BJ (cell line): ENCODE measurements at regions of chr7 and their contacts with region 1.

Region 1: DNA sequence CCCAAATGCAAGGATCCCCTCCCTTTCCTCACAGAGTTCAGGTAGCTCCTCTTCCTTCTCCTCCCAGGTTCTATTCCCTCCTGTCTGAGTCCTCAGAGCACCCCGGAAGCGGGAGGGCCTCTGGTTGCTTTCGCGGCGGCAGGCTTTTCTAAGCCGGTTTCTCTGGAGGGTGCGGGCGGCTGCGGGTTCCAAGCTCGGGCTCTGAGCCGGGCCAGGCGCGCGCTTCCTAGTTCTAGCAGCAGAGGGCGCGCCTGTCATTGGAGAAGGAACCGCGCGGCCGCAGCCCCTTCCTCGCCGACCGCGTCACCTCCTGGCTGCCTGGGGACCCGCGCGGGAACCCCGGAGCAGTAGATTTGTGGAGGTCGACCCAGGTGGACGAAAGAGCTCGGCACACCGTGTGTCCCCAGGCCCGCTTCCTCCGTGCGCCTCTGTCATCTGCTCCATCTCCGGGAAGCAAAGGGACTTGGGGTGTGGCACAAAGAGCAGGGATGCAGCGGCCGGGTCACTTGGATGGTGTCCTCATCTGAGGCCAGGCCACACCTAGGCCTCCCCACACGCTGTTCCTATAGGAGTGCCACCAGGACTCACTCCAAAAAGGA is 389.0 kb upstream of the PODXL start:
- DNase-seq: no peak
- H3K4me3 ChIP-seq: no peak overlapping the region
- H3K27me3 ChIP-seq: peaks cover 7% of the 10 kb centered on the region
- CTCF ChIP-seq: peak; percentile 92

Region 2: DNA sequence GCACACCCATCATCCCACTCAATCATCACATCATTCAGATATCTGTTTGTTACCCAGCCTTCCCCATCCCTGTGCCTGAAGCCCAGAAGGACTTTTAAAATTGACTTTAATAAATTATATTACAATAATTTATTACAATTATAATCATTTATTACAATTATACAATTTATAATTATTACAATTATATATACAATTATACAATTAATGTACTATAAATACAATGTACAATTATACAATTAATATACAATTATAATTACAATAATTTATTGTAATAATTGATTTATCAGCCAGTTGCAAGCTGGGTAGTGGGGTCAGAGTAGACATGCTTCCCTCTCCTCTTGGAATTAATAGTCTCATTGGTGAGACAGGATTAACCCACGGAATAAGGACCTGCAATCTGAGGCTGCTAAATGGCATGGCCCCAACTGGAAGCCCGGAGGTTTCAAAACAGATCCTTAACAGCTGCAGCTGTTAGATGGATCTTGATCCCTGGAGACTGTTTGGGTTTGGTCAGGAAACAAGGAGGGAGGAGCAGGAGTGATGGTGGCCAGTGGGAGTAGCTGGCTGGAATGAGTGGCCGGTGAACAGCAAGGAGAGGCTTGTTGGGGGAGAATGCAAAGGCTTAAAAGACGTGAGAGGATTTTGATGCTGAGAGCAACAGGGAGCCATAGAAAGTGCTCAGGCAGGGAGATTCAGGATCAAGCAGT is 13.8 kb after region 1 on chr7:
- CTCF ChIA-PET with region 1: interaction called, 13 read pairs
- POLR2A ChIA-PET with region 1: no interaction called
- DNase-seq: no peak
- H3K4me3 ChIP-seq: no peak overlapping the region
- H3K27me3 ChIP-seq: peaks cover 4% of the 10 kb centered on the region; the same call in 1 of the 2 replicates
- CTCF ChIP-seq: no peak

Region 3: DNA sequence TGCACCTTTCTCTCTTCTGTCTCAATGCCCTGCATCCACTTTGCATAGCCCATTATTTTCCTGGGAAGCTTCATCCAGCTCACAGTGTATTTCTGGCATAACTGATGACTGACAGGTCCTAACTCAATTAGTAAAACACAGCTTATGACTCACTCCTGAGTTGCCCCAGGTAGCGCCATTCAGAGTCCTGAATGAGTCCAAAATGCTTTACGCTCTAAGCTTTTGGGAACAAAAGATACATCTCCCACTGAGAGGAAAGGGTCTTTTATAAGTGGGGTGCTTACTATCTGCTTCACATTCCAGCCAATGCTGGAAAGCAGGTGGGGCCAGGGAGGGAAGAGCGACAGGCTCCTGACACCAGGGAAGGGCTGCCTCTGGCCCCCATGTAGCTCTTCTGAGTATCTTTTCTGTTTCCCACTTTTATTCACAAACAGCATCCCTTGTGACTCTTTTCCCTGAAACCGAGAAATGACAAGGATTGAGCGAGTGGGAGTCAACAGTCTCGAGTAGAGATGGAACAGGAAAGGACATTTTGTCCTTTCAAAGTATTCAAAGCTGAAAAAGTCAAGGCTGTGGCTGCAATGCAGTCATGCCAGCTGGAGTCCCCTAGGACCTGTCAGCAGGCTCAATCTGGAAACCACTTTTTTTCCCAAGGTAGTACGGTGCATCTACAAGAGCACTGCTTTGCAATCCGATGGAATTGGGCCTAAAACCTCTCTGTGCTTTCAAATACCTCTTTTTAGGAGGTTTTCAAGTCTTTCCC is 90.4 kb after region 1 on chr7:
- CTCF ChIA-PET with region 1: no interaction called
- POLR2A ChIA-PET with region 1: no interaction called
- DNase-seq: no peak
- H3K4me3 ChIP-seq: no peak overlapping the region
- H3K27me3 ChIP-seq: no peaks in the 10 kb centered on the region
- CTCF ChIP-seq: no peak

Region 4: GRCh38 chr7:132249614-132249972 is 304.2 kb after region 1 on chr7:
- CTCF ChIA-PET with region 1: interaction called, 24 read pairs
- POLR2A ChIA-PET with region 1: no interaction called
- DNase-seq: no peak
- H3K4me3 ChIP-seq: no peak overlapping the region
- H3K27me3 ChIP-seq: no peaks in the 10 kb centered on the region
- CTCF ChIP-seq: peak; percentile 9; the same call in 1 of the 2 replicates